ENCODE measurements at regions of chr19 and their contacts with region 1.

Region 1: GRCh38 chr19:13104360-13104847 is 1.7 kb upstream of the LYL1 start:
- DNase-seq: peak; percentile 98
- ATAC-seq: peak; percentile 60
- H3K4me3 ChIP-seq: peak overlapping the region; percentile 53 to 98 (median 96)
- H3K4me3 Mint-ChIP-seq: peak overlapping the region; percentile 97
- H3K27ac ChIP-seq: peak overlapping the region; percentile 83 to 100
- H3K27ac Mint-ChIP-seq: peak overlapping the region; percentile 100
- H3K4me1 ChIP-seq: peaks cover 39 to 69% of the 10 kb centered on the region in 2 donors
- H3K4me1 Mint-ChIP-seq: peaks cover 62% of the 10 kb centered on the region
- H3K27me3 ChIP-seq: no peaks in the 10 kb centered on the region
- H3K27me3 Mint-ChIP-seq: no peaks in the 10 kb centered on the region
- CTCF ChIP-seq: peak; percentile 97

Region 2: DNA sequence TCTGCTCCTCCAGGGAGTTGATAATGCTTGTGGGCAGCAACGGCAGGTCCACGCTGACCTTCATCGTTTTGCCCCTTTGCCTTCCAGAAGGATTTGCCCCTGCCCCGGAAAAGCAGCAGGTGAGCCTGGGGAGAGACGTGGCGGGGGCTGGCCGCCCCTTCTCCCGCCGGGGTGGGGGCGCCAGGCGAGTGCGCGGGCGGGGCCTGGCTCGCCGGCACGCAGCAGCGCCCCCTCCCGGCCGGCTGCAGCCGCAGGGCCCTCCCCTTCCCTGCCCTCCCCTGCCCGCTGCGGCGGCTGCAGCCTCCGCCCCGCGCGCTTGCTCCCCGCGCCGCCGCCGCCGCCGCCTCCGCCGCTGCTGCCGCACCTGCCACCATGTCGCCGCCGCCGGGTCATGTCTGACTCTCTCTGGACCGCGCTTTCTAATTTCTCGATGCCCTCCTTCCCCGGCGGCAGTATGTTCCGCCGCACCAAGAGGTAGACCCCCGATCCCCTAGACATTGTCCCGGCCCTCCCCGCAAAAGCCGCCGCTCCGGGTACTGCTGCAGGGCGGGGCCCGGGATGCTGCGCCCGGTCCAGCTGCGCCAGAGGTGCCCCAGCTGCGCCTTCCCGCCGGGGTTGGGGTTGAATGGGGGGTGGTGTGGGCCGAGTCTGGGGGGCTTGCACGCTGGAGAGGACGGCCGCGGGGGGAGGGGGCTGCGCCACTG is 266.1 kb before region 1 on chr19 and contains the start of gene MAST1:
- CTCF ChIA-PET with region 1: no interaction called
- POLR2A ChIA-PET with region 1: no interaction called
- intact Hi-C with region 1: no loop called
- DNase-seq: peak; percentile 74
- ATAC-seq: peak; percentile 72
- H3K4me3 ChIP-seq: peak within 1 kb of the TSS in 3 of 5 experiments; percentile 12 to 57 (median 36)
- H3K4me3 Mint-ChIP-seq: peak within 1 kb of the TSS; percentile 75
- H3K27ac ChIP-seq: no peak within 1 kb of the TSS
- H3K27ac Mint-ChIP-seq: no peak within 1 kb of the TSS
- H3K4me1 ChIP-seq: peaks cover 43 to 56% of the 10 kb centered on the region in 2 donors
- H3K4me1 Mint-ChIP-seq: peaks cover 48% of the 10 kb centered on the region
- H3K27me3 ChIP-seq: peaks cover 6 to 93% (median 57%) of the 10 kb centered on the region in 4 experiments
- H3K27me3 Mint-ChIP-seq: peaks cover 65% of the 10 kb centered on the region
- CTCF ChIP-seq: peak; percentile 63
- total RNA-seq, gene MAST1: 0.39 and 1.2 TPM in 2 replicates

Region 3: GRCh38 chr19:12983542-12984142 is 120.8 kb before region 1 on chr19:
- CTCF ChIA-PET with region 1: interaction called, 25 read pairs
- POLR2A ChIA-PET with region 1: no interaction called
- intact Hi-C with region 1: no loop called
- DNase-seq: peak; percentile 93
- ATAC-seq: peak; percentile 77
- H3K4me3 ChIP-seq: peak overlapping the region in 4 of 5 experiments; percentile 24 to 62 (median 36)
- H3K4me3 Mint-ChIP-seq: no peak overlapping the region
- H3K27ac ChIP-seq: no peak overlapping the region
- H3K27ac Mint-ChIP-seq: no peak overlapping the region
- H3K4me1 ChIP-seq: peaks cover 30 to 43% of the 10 kb centered on the region in 2 donors
- H3K4me1 Mint-ChIP-seq: peaks cover 15% of the 10 kb centered on the region
- H3K27me3 ChIP-seq: peaks cover 0 to 10% (median 2%) of the 10 kb centered on the region in 4 experiments
- H3K27me3 Mint-ChIP-seq: peaks cover 4% of the 10 kb centered on the region
- CTCF ChIP-seq: peak; percentile 91

Region 4: DNA sequence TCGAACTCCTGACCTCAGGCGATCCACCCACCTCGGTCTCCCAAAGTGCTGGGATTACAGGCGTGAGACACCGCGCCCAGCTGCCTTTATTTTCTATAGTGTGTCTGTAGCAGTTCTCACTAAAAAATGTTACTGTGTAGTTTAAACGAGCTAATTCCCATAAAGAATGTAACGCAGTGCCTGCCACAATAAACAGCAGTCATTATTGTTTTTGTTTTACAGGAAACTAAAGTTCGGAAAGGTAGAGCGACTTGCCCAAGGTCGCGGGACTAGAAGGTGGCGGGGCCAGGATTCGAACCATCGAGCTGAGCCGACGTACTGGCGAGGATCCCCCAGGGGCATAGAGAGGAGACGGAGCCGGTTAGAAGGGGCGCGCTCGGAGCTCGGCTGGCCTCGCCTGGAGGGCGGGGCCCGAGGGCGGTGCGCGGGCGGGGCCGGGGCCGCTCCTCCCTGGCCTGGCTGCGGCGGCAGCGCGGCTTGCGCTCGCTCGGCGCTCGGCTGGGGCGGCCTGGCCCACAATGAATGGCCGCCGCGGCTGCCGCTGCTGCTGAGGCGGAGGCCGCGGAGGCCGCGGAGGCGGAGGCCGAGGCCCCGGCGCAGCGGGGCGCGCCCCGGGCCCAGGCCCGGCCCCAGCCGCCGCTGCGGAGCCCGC is 13.5 kb after region 1 on chr19 and contains the start of gene NACC1:
- CTCF ChIA-PET with region 1: interaction called, 31 read pairs
- POLR2A ChIA-PET with region 1: interaction called, 80 read pairs
- intact Hi-C with region 1: loop called (anchors 1 kb)
- DNase-seq: peak; percentile 92
- ATAC-seq: peak; percentile 78
- H3K4me3 ChIP-seq: peak within 1 kb of the TSS; percentile 81 to 97 (median 85)
- H3K4me3 Mint-ChIP-seq: peak within 1 kb of the TSS; percentile 99
- H3K27ac ChIP-seq: peak within 1 kb of the TSS; percentile 47 to 81
- H3K27ac Mint-ChIP-seq: peak within 1 kb of the TSS; percentile 95
- H3K4me1 ChIP-seq: peaks cover 26 to 46% of the 10 kb centered on the region in 2 donors
- H3K4me1 Mint-ChIP-seq: peaks cover 55% of the 10 kb centered on the region
- H3K27me3 ChIP-seq: no peaks in the 10 kb centered on the region
- H3K27me3 Mint-ChIP-seq: no peaks in the 10 kb centered on the region
- CTCF ChIP-seq: no peak
- total RNA-seq, gene NACC1: 25.9 and 30.6 TPM in 2 replicates

Region 5: GRCh38 chr19:13162518-13163314 is 58.3 kb after region 1 on chr19:
- CTCF ChIA-PET with region 1: interaction called, 5 read pairs
- POLR2A ChIA-PET with region 1: interaction called, 11 read pairs
- intact Hi-C with region 1: no loop called
- DNase-seq: peak; percentile 85
- ATAC-seq: peak; percentile 42
- H3K4me3 ChIP-seq: peak overlapping the region; percentile 24 to 71 (median 61)
- H3K4me3 Mint-ChIP-seq: peak overlapping the region; percentile 92
- H3K27ac ChIP-seq: peak overlapping the region; percentile 85 to 94
- H3K27ac Mint-ChIP-seq: peak overlapping the region; percentile 97
- H3K4me1 ChIP-seq: peaks cover 84 to 96% of the 10 kb centered on the region in 2 donors
- H3K4me1 Mint-ChIP-seq: peaks cover 62% of the 10 kb centered on the region
- H3K27me3 ChIP-seq: no peaks in the 10 kb centered on the region
- H3K27me3 Mint-ChIP-seq: no peaks in the 10 kb centered on the region
- CTCF ChIP-seq: no peak

Region 6: DNA sequence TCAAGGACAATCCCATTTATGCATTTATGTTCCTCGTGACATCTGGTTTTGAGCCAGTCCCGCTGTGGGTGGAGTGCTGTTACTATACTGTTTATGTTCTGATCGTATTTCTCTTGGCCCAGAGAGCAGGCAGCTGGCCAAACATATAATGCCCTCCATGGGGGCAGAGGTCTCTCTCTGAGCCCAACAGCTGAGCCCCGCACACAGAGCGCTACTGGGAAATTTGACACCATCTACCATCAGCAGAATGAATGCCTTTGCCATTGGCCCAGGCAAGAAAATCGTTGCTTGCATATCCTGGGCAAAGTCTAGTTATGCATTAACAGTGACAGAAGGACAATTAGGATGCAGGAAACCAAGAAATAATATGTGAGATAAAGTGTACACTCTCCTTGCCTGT is 528.7 kb after region 1 on chr19:
- CTCF ChIA-PET with region 1: no interaction called
- POLR2A ChIA-PET with region 1: no interaction called
- intact Hi-C with region 1: no loop called
- DNase-seq: no peak
- ATAC-seq: no peak
- H3K4me3 ChIP-seq: no peak overlapping the region
- H3K4me3 Mint-ChIP-seq: no peak overlapping the region
- H3K27ac ChIP-seq: no peak overlapping the region
- H3K27ac Mint-ChIP-seq: no peak overlapping the region
- H3K4me1 ChIP-seq: no peaks in the 10 kb centered on the region
- H3K4me1 Mint-ChIP-seq: peaks cover 2% of the 10 kb centered on the region
- H3K27me3 ChIP-seq: peaks cover 0 to 8% (median 2%) of the 10 kb centered on the region in 4 experiments
- H3K27me3 Mint-ChIP-seq: peaks cover 18% of the 10 kb centered on the region
- CTCF ChIP-seq: no peak

Region 7: GRCh38 chr19:13846557-13847406 is 742.4 kb after region 1 on chr19:
- CTCF ChIA-PET with region 1: no interaction called
- POLR2A ChIA-PET with region 1: interaction called, 3 read pairs
- intact Hi-C with region 1: loop called (anchors 5 kb)
- DNase-seq: peak; percentile 98
- ATAC-seq: peak; percentile 58
- H3K4me3 ChIP-seq: peak overlapping the region in 4 of 5 experiments; percentile 48 to 72 (median 50)
- H3K4me3 Mint-ChIP-seq: peak overlapping the region; percentile 89
- H3K27ac ChIP-seq: peak overlapping the region; percentile 91 to 98
- H3K27ac Mint-ChIP-seq: peak overlapping the region; percentile 99
- H3K4me1 ChIP-seq: peaks cover 51 to 63% of the 10 kb centered on the region in 2 donors
- H3K4me1 Mint-ChIP-seq: peaks cover 57% of the 10 kb centered on the region
- H3K27me3 ChIP-seq: peaks cover 0 to 22% (median 0%) of the 10 kb centered on the region in 4 experiments
- H3K27me3 Mint-ChIP-seq: no peaks in the 10 kb centered on the region
- CTCF ChIP-seq: no peak

Region 8: GRCh38 chr19:14383661-14384555 is 1279.5 kb after region 1 on chr19:
- CTCF ChIA-PET with region 1: no interaction called
- POLR2A ChIA-PET with region 1: no interaction called
- intact Hi-C with region 1: loop called (anchors 5 kb)
- DNase-seq: peak; percentile 68
- ATAC-seq: peak; percentile 12
- H3K4me3 ChIP-seq: peak overlapping the region; percentile 19 to 90 (median 39)
- H3K4me3 Mint-ChIP-seq: peak overlapping the region; percentile 85
- H3K27ac ChIP-seq: peak overlapping the region; percentile 97 to 99
- H3K27ac Mint-ChIP-seq: peak overlapping the region; percentile 89
- H3K4me1 ChIP-seq: peaks cover 48 to 70% of the 10 kb centered on the region in 2 donors
- H3K4me1 Mint-ChIP-seq: peaks cover 51% of the 10 kb centered on the region
- H3K27me3 ChIP-seq: no peaks in the 10 kb centered on the region
- H3K27me3 Mint-ChIP-seq: no peaks in the 10 kb centered on the region
- CTCF ChIP-seq: no peak

Measured in B cell (primary cell).